Cardiac septum (tissue), 1 donor: ENCODE measurements at regions of chr6 and their contacts with region 1.

Region 1: DNA sequence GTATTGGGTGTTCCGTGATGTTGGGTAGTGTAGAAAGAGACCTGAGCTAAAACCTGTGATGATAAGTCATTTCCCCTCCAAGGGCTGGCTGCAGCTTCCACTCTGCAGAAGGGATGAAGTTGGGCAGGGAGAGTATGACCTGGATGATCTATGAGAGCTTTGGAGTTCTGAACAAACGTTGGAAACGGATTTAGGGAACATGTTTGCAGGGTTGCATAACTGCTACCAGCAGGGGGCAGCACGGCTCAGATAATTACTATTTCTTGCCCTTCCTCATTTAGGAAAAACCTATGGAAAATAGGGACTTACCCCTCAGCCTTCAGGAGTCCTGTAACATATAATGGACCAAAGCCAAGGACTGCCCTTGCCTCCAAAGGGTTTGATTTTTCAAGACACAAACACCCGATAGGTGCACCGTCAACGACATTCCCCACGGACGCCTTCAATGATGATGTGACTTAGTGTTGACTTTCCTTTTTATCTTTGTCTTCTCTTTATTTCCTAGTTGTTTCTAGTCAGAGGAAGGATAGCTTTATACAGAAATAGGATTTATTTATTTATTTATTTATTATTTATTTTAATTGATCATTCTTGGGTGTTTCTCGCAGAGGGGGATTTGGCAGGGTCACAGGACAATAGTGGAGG is 164.9 kb upstream of the SASH1 start:
- DNase-seq: no peak

Region 2: GRCh38 chr6:147438758-147439528 is 738.8 kb before region 1 on chr6:
- intact Hi-C with region 1: no loop called
- DNase-seq: no peak

Region 3: GRCh38 chr6:148250975-148251685 is 73.4 kb after region 1 on chr6:
- intact Hi-C with region 1: loop called (anchors 1 kb)
- DNase-seq: no peak

Region 4: DNA sequence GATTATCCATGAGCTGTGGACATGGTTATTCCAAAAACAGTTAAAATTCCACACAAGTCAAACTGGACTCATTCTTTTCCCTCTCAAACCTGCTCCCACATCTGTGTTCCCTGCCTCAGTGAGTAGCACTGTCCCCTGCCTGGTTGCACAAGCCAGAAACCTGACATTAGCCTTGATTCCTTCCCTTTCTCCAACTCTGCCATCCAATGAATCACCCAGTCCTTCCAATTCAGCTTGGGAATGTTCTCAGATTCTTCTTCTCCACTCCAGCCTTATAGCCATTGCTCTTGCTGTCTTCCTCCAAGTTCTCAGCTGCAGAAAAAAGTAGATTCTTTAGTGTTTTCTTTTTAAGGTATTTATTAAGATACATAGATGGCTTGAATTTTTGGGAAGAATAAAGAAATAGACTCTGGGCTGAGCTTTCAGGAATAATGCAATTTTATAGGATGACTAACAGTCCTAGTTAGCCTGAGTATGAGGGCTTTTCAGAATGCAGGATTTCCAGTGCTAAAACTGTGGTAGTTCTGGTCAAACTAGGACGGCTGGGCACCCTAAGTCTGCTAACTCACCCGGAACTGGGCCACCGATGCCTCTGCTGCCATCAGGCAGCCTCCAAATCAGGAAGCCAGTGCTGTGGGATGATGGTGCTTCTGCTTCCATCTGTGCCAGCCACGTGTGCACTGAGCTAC is 146.7 kb after region 1 on chr6:
- intact Hi-C with region 1: no loop called
- DNase-seq: no peak